Dorsolateral prefrontal cortex (tissue), 120 donors: ENCODE measurements at regions of chr1 and their contacts with region 1.

Region 1: GRCh38 chr1:33094971-33095604 is 14.1 kb downstream of the AZIN2 start:
- DNase-seq: peak in 2 of 10 donors; percentile 50 to 68
- H3K4me3 ChIP-seq: no peak overlapping the region
- H3K27ac ChIP-seq: peak overlapping the region in 1 of 59 donors; percentile 39
- H3K27me3 ChIP-seq: no peaks in the 10 kb centered on the region
- CTCF ChIP-seq: peak; percentile 89 to 100 (median 96)

Region 2: DNA sequence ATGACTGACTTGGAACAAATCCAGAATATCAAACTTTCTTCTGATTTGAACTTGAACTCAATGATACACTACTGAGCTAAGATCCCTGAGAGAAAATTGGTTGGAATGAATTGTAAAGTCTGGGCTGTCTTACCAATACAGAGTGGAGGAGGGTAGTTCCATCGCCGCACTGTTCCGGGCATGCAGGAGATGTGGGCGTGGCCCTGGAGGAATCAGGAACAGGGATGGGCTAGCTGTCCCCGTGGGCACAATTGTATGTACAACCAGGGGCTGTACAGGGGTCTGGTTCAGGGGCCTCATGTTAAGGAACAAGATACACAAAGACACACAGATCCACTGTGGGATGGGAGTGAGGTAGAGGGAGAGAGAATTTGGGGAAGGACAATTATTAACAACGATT is 521.7 kb after region 1 on chr1:
- intact Hi-C with region 1: loop called in 1 of 2 experiments (anchors 1 kb)
- DNase-seq: no peak
- H3K4me3 ChIP-seq: no peak overlapping the region
- H3K27ac ChIP-seq: no peak overlapping the region
- H3K27me3 ChIP-seq: no peaks in the 10 kb centered on the region
- CTCF ChIP-seq: no peak